ENCODE measurements at regions of chr2 and their contacts with region 1.

Region 1: GRCh38 chr2:131154071-131154531 is 49.0 kb downstream of the PLEKHB2 start:
- DNase-seq: peak; percentile 67
- H3K4me3 Mint-ChIP-seq: no peak overlapping the region
- H3K27ac Mint-ChIP-seq: no peak overlapping the region
- H3K4me1 Mint-ChIP-seq: no peaks in the 10 kb centered on the region
- H3K27me3 Mint-ChIP-seq: peaks cover 18% of the 10 kb centered on the region
- CTCF ChIP-seq: peak; percentile 91

Region 2: DNA sequence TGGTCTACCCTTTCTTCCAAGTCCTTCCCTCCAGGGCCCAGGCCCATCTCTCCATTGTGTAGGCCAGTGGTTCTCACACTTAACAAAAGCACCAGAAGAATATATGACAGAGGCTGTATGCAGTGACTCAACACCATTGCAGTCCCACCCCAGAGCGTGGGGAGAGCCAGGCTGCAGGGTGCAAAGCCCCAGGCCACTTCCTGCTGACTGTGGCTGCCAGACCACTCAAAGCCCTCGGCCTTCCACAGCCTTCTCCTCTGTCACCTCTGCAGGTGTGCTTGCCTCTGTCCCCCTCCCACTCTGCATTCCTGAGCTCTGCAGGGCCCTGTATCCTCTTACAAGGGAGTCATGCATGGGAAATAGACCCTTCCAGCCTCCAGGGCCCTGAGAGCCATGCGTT is 357.8 kb before region 1 on chr2:
- CTCF ChIA-PET with region 1: no interaction called
- POLR2A ChIA-PET with region 1: no interaction called
- intact Hi-C with region 1: no loop called
- DNase-seq: no peak
- H3K4me3 Mint-ChIP-seq: no peak overlapping the region
- H3K27ac Mint-ChIP-seq: no peak overlapping the region
- H3K4me1 Mint-ChIP-seq: peaks cover 4% of the 10 kb centered on the region
- H3K27me3 Mint-ChIP-seq: no peaks in the 10 kb centered on the region
- CTCF ChIP-seq: no peak

Region 3: GRCh38 chr2:131132729-131133128 is 21.4 kb before region 1 on chr2:
- CTCF ChIA-PET with region 1: interaction called, 19 read pairs
- POLR2A ChIA-PET with region 1: interaction called, 3 read pairs
- intact Hi-C with region 1: no loop called
- DNase-seq: no peak
- H3K4me3 Mint-ChIP-seq: no peak overlapping the region
- H3K27ac Mint-ChIP-seq: no peak overlapping the region
- H3K4me1 Mint-ChIP-seq: no peaks in the 10 kb centered on the region
- H3K27me3 Mint-ChIP-seq: no peaks in the 10 kb centered on the region
- CTCF ChIP-seq: no peak

Region 4: GRCh38 chr2:131140581-131140980 is 13.5 kb before region 1 on chr2:
- CTCF ChIA-PET with region 1: interaction called, 19 read pairs
- POLR2A ChIA-PET with region 1: no interaction called
- intact Hi-C with region 1: no loop called
- DNase-seq: no peak
- H3K4me3 Mint-ChIP-seq: no peak overlapping the region
- H3K27ac Mint-ChIP-seq: no peak overlapping the region
- H3K4me1 Mint-ChIP-seq: no peaks in the 10 kb centered on the region
- H3K27me3 Mint-ChIP-seq: no peaks in the 10 kb centered on the region
- CTCF ChIP-seq: no peak

Region 5: GRCh38 chr2:131492418-131493198 is 338.5 kb after region 1 on chr2:
- CTCF ChIA-PET with region 1: interaction called, 5 read pairs
- POLR2A ChIA-PET with region 1: no interaction called
- intact Hi-C with region 1: loop called (anchors 10 kb)
- DNase-seq: peak; percentile 96
- H3K4me3 Mint-ChIP-seq: peak overlapping the region; percentile 92
- H3K27ac Mint-ChIP-seq: peak overlapping the region; percentile 94
- H3K4me1 Mint-ChIP-seq: peaks cover 12% of the 10 kb centered on the region
- H3K27me3 Mint-ChIP-seq: no peaks in the 10 kb centered on the region
- CTCF ChIP-seq: peak; percentile 67